ENCODE measurements at regions of chr7 and their contacts with region 1.

Region 1: DNA sequence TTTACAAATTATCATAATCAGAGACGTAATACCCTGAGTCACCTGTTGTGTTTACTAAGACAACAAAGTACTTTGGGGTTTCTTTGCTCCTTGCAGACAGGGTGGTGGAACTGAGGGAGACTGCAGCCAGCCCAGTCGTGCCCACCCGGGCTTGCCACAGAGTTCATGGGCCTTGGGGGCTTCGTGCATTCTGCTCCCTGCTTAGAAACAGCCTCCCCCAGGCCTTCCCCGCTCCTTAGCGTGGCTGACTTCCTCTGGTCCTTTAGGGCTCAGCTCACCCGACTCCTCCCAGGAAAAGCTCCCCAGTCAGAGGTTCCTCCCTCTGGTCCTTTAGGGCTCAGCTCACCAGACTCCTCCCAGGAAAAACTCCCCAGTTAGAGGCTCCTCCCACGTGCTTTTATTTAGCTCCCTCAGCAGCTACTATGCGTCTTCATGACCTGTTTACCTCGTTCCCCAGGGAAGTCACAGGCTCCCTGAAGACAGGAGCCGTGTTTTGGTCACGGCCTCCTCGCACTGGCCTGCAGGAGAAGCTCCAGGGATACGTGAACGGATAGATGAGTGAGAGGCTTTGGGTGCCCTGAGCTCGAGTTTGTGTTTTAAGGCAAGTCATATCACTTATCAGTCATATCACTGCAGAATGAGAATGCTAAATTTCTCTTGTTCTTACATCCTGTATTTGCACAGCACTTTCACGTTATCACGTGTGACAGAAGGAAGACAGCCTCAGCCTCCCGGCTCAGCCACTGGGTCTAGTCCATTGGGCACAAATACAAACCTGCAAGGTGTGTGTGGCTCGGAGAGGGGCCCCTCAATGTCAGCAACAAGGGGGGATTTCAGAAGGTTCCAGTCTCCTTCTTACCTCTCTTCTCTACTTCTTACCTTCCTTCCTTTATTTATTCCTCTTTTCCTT is 52.7 kb upstream of the VIPR2 start:
- DNase-seq: peak; percentile 35
- H3K4me3 Mint-ChIP-seq: peak overlapping the region; percentile 76
- H3K27ac Mint-ChIP-seq: peak overlapping the region; percentile 94
- H3K4me1 Mint-ChIP-seq: peaks cover 36% of the 10 kb centered on the region
- H3K27me3 Mint-ChIP-seq: peaks cover 3% of the 10 kb centered on the region

Region 2: GRCh38 chr7:158704704-158705468 is 492.4 kb before region 1 on chr7 and contains the start of gene NCAPG2:
- intact Hi-C with region 1: loop called (anchors 2 kb)
- DNase-seq: peak; percentile 94
- H3K4me3 Mint-ChIP-seq: peak within 1 kb of the TSS; percentile 87
- H3K27ac Mint-ChIP-seq: peak within 1 kb of the TSS; percentile 87
- H3K4me1 Mint-ChIP-seq: peaks cover 52% of the 10 kb centered on the region
- H3K27me3 Mint-ChIP-seq: peaks cover 2% of the 10 kb centered on the region
- total RNA-seq, gene NCAPG2: 76.5 and 86.9 TPM in 2 replicates

Region 3: GRCh38 chr7:159004411-159004810 is 192.9 kb before region 1 on chr7:
- intact Hi-C with region 1: loop called (anchors 1 kb)
- DNase-seq: peak; percentile 14
- H3K4me3 Mint-ChIP-seq: peak overlapping the region; percentile 3
- H3K27ac Mint-ChIP-seq: peak overlapping the region; percentile 84
- H3K4me1 Mint-ChIP-seq: peaks cover 21% of the 10 kb centered on the region
- H3K27me3 Mint-ChIP-seq: peaks cover 5% of the 10 kb centered on the region

Region 4: DNA sequence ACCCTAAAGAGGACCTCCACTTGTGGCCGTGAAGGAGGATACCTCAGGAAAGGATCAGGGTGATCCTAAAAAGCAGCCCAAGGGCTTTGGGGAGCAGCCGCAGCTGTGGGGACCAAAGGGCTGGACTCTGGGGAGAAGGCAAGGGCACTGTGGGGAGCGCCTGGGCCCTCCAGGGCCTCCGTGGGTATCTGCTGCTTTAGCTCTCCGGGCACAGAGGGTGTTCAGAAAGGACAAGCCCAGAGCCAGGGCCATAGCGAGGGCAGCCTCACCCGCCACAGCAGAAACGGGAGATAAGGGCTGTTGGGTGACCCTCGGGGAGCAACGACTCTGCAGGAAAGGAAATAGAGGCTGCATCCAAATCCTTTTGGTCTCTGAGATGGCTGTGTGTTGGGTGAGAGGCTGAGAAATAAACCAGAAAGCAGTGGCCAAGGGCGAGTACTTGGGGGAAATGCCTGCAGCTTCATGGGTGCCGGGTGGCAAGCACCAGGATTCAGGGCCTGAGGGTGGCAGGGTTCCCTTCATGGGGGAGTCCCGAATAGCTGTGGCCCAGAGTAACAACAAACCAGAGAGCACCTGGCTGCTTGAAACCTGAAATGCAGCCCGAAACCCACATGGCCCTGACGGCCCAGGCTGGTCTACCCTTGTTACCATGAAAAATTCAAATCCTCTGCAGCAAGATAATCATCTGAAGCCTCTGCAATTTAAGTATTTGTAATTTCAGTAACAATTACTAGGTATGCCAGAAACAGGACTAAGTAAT is 147.9 kb before region 1 on chr7:
- intact Hi-C with region 1: loop called (anchors 2 kb)
- DNase-seq: no peak
- H3K4me3 Mint-ChIP-seq: no peak overlapping the region
- H3K27ac Mint-ChIP-seq: no peak overlapping the region
- H3K4me1 Mint-ChIP-seq: peaks cover 21% of the 10 kb centered on the region
- H3K27me3 Mint-ChIP-seq: no peaks in the 10 kb centered on the region

Region 5: GRCh38 chr7:159143780-159144757 is 53.3 kb before region 1 on chr7:
- intact Hi-C with region 1: loop called (anchors 2 kb)
- DNase-seq: no peak
- H3K4me3 Mint-ChIP-seq: peak overlapping the region; percentile 61
- H3K27ac Mint-ChIP-seq: no peak overlapping the region
- H3K4me1 Mint-ChIP-seq: no peaks in the 10 kb centered on the region
- H3K27me3 Mint-ChIP-seq: peaks cover 39% of the 10 kb centered on the region